Dendritic cell treated with granulocyte-macrophage colony-stimulating factor and Interleukin-4, amounts not matched to agents 40 ng/mL and 50 ng/mL, for 4 days (primary cell): ENCODE measurements at regions of chr17 and their contacts with region 1.

Region 1: GRCh38 chr17:76278952-76279741 is 14.0 kb downstream of the UBALD2 start:
- H3K4me3 Mint-ChIP-seq: no peak overlapping the region
- H3K27ac Mint-ChIP-seq: no peak overlapping the region
- H3K4me1 Mint-ChIP-seq: peaks cover 30% of the 10 kb centered on the region
- H3K27me3 Mint-ChIP-seq: peaks cover 9% of the 10 kb centered on the region

Region 2: DNA sequence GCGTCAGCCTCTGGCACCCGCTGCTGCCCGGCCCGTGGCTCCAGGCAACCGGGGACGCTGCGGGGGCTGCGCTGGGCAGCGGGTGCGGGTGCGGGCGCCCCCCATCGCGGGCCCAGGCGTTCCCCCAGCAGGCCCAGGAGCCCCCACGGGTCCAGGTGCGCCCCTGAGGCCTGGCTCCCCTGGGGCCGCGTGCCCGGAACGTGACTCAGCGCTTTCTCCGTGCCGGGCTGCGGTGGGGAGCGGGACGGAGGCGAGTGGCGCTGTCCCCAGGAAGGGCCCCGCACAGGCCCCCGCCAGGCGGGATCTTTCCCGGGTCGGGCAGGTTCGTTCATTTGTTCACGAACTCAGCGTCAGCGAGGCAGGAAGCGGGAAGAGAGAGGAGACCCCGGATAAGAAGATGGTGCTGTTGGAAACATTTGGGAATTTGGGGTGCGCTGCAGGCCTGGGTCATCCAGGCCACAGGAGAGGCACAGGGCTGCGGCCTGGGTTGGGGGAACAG is 157.2 kb before region 1 on chr17:
- intact Hi-C with region 1: loop called (anchors 1 kb)
- H3K4me3 Mint-ChIP-seq: peak overlapping the region; percentile 55
- H3K27ac Mint-ChIP-seq: peak overlapping the region; percentile 37
- H3K4me1 Mint-ChIP-seq: peaks cover 14% of the 10 kb centered on the region
- H3K27me3 Mint-ChIP-seq: peaks cover 44% of the 10 kb centered on the region

Region 3: GRCh38 chr17:76182016-76182764 is 97.0 kb before region 1 on chr17:
- intact Hi-C with region 1: loop called (anchors 2 kb)
- H3K4me3 Mint-ChIP-seq: no peak overlapping the region
- H3K27ac Mint-ChIP-seq: no peak overlapping the region
- H3K4me1 Mint-ChIP-seq: no peaks in the 10 kb centered on the region
- H3K27me3 Mint-ChIP-seq: no peaks in the 10 kb centered on the region

Region 4: DNA sequence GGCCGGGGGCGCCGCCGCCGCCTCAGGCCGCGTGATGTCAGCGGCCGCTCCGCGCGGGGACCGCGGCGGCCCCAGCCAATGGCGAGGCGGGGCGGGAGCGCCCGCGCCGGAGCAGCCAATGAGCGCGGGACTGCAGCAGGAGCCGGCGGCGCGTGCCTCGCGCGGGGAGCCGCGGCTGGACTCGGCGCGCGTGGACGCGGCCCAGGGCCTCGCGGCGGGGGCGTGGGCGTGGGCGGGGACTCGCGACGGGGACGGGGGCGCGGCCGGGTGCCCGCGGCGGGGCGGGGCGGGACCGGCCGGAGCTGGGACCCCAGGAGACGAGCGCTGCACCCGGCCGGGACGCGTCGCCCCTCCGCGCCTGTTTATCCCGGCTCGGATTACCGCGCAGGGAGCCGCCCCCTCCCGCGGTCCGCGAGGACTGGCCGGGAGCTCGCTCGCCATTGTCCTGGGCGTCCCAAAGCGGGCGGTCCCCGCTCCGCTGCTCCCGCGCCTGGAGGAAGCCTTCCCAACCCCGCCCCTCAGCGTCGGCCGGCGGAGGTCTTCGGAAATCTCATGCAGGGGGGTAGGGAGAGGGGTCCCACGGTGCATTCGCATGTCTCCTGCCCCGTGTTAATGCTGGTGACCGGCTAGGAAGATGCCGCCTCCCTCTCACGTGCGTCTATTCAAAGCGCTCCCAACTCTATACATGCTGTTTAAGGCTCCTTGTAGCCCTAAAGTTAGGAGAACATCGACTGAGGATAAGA is 38.5 kb before region 1 on chr17 and contains the start of gene RNF157:
- intact Hi-C with region 1: loop called (anchors 5 kb)
- H3K4me3 Mint-ChIP-seq: peak within 1 kb of the TSS; percentile 72
- H3K27ac Mint-ChIP-seq: peak within 1 kb of the TSS; percentile 20
- H3K4me1 Mint-ChIP-seq: peaks cover 15% of the 10 kb centered on the region
- H3K27me3 Mint-ChIP-seq: peaks cover 70% of the 10 kb centered on the region